ENCODE measurements at regions of chr5 and their contacts with region 1.

Region 1: DNA sequence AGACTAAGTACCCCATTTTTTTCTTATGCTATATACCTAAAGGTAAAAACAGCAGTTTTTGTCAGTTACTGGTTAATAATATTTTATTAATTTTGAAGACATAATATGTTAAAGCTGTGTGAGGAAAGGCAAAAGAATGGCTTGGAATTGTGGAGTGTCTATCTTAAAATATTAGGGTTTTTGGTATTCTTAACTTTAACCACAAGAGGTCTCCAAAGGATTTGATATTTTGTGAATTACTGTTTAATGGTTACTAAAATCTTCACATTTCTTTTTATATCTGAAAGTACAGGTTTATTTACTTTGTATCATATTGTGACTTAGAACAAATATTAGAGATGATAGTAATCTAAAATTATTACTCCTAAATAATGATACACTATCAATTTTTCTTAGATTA is 32.0 kb upstream of the DHFR start:
- DNase-seq: peak; percentile 48
- H3K4me3 ChIP-seq: no peak overlapping the region
- H3K27ac ChIP-seq: no peak overlapping the region
- H3K4me1 ChIP-seq: peaks cover 4% of the 10 kb centered on the region
- H3K27me3 ChIP-seq: no peaks in the 10 kb centered on the region
- CTCF ChIP-seq: peak; percentile 60

Region 2: DNA sequence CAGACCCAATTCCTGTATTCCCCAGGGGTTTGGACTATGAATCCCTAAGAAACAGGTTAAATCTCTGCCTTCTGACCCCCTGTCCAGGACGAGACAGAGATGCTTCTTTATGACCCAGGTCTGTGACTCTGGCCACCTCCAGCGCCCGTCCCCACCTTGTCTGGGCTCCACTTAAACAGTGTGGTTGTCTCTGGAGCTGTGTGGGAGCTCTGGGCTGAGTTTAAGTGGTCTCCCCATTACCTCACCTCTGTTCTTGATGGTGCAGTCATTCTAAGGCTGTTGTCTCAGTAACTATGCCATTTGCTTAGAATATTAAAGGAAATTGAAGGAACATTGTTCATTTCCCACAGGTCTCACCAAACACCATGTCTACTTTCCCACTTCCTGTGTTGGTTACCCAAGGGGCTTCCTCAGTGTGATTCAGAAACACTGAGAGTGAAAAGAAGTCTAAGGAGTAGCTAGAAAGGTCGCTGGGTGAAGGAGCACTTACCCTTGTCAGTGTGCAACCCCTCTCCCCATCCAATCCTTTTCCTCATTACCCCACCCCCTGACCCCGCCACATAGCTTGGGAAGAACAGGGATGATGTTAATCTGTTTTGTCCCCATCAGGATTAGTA is 418.6 kb after region 1 on chr5:
- CTCF ChIA-PET with region 1: no interaction called
- POLR2A ChIA-PET with region 1: no interaction called
- intact Hi-C with region 1: loop called (anchors 5 kb)
- DNase-seq: no peak
- H3K4me3 ChIP-seq: no peak overlapping the region
- H3K27ac ChIP-seq: no peak overlapping the region
- H3K4me1 ChIP-seq: no peaks in the 10 kb centered on the region
- H3K27me3 ChIP-seq: no peaks in the 10 kb centered on the region
- CTCF ChIP-seq: no peak

Region 3: GRCh38 chr5:81165493-81166119 is 478.8 kb after region 1 on chr5:
- CTCF ChIA-PET with region 1: no interaction called
- POLR2A ChIA-PET with region 1: no interaction called
- intact Hi-C with region 1: loop called (anchors 2 kb)
- DNase-seq: peak; percentile 77
- H3K4me3 ChIP-seq: no peak overlapping the region
- H3K27ac ChIP-seq: no peak overlapping the region
- H3K4me1 ChIP-seq: no peaks in the 10 kb centered on the region
- H3K27me3 ChIP-seq: no peaks in the 10 kb centered on the region
- CTCF ChIP-seq: peak; percentile 90

Region 4: GRCh38 chr5:81194633-81195333 is 508.0 kb after region 1 on chr5:
- CTCF ChIA-PET with region 1: no interaction called
- POLR2A ChIA-PET with region 1: no interaction called
- intact Hi-C with region 1: loop called (anchors 2 kb)
- DNase-seq: peak; percentile 89
- H3K4me3 ChIP-seq: no peak overlapping the region
- H3K27ac ChIP-seq: no peak overlapping the region
- H3K4me1 ChIP-seq: peaks cover 5% of the 10 kb centered on the region
- H3K27me3 ChIP-seq: no peaks in the 10 kb centered on the region
- CTCF ChIP-seq: peak; percentile 98

Region 5: DNA sequence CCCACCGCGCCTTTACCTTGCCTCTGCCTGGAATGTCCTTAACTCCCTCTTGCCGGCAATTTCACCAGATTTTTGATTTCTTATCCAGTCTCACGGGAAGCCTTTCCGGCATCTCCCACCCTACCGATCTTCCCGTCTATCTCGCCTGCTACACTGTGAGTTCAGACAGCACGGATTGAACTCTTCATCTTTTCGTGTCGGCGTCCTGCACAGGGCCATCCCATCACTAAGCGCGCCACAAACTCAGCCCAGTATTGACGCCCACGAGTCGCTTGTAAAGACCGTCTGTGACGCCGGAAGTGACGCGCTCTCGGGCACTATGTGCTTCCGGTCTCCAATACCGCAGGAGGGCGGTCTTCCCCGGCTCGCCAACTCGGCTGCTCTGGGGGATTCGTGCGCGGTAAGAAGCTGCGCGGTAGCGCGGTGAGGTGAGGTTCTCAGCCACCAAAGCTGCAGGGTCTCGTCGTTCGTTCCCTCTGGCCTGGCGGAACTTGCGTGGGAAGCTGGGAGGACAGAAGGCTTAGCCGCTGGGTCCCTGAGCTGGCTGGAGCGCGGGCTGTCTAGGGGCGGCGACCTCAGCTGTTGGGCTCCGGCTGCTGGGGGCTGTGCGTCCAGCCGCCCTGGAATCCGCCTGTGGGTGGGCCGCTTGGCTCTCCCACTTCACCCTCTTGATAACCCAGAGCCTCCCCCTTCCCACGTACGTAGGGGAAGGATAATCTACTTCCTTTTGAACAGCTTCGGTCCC is 614.7 kb after region 1 on chr5 and contains the start of gene ZCCHC9:
- CTCF ChIA-PET with region 1: no interaction called
- POLR2A ChIA-PET with region 1: no interaction called
- intact Hi-C with region 1: loop called (anchors 5 kb)
- DNase-seq: peak; percentile 97
- H3K4me3 ChIP-seq: peak within 1 kb of the TSS; percentile 87
- H3K27ac ChIP-seq: peak within 1 kb of the TSS; percentile 91
- H3K4me1 ChIP-seq: peaks cover 36% of the 10 kb centered on the region
- H3K27me3 ChIP-seq: no peaks in the 10 kb centered on the region
- CTCF ChIP-seq: no peak; the same call in 1 of the 2 replicates
- total RNA-seq, gene ZCCHC9: 16.5 and 21.2 TPM in 2 replicates